Psoas muscle (tissue), 8 donors: ENCODE measurements at regions of chr9 and their contacts with region 1.

Region 1: GRCh38 chr9:111369873-111370272 is 39.8 kb upstream of the OR2K2 start:
- DNase-seq: no peak
- ATAC-seq: no peak
- H3K4me3 ChIP-seq: no peak overlapping the region
- H3K27ac ChIP-seq: no peak overlapping the region
- H3K4me1 ChIP-seq: no peaks in the 10 kb centered on the region
- H3K27me3 ChIP-seq: no peaks in the 10 kb centered on the region
- CTCF ChIP-seq: no peak

Region 2: DNA sequence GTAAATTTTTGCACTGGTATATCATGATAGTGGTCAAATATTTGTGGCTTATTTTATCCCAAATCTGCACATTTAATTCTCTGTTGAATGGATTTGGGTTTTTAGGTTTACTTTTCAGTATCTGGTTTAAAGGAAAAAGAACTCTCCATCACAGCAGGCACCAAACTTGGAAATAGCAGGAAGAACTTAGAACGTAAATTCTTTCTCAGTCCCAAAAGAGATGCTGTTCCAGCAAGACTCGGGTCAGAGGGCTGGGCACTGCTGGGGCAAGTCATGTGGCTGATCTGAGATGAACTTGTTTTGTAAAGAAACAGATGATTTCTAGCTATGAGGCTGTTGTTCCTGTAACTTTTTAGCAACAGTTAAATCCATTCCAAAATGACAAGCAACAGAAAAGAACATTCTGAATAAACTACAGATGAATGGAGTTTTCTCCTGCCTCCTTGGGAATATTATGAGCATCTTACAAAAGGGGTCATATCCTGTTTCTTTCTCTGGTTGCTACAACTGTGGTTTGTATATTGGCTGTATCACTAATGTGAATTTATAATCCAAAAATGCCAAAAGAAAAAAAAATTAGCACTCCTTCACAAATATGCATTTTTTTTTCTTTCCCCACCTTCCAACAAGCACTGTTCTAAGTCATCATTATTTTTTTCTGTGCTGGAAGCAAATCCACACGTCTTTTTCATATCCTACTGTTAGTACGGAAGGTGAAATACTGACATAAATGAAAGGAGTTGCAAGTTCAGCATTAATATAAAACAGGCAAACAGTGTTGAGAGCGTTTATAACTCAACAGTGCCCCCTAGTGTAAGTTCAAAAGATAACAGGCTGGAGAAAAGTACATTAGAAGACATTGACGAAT is 70.9 kb before region 1 on chr9:
- intact Hi-C with region 1: no loop called
- DNase-seq: peak; percentile 45 to 82
- ATAC-seq: peak; percentile 54 to 81 (median 62)
- H3K4me3 ChIP-seq: no peak overlapping the region
- H3K27ac ChIP-seq: no peak overlapping the region
- H3K4me1 ChIP-seq: no peaks in the 10 kb centered on the region
- H3K27me3 ChIP-seq: no peaks in the 10 kb centered on the region
- CTCF ChIP-seq: peak; percentile 77

Region 3: GRCh38 chr9:111412280-111412679 is 42.4 kb after region 1 on chr9:
- intact Hi-C with region 1: loop called (anchors 5 kb)
- DNase-seq: no peak
- ATAC-seq: no peak
- H3K4me3 ChIP-seq: no peak overlapping the region
- H3K27ac ChIP-seq: no peak overlapping the region
- H3K4me1 ChIP-seq: no peaks in the 10 kb centered on the region
- H3K27me3 ChIP-seq: no peaks in the 10 kb centered on the region
- CTCF ChIP-seq: no peak